Mammary epithelial cell (primary cell): ENCODE measurements at regions of chr12 and their contacts with region 1.

Region 1: DNA sequence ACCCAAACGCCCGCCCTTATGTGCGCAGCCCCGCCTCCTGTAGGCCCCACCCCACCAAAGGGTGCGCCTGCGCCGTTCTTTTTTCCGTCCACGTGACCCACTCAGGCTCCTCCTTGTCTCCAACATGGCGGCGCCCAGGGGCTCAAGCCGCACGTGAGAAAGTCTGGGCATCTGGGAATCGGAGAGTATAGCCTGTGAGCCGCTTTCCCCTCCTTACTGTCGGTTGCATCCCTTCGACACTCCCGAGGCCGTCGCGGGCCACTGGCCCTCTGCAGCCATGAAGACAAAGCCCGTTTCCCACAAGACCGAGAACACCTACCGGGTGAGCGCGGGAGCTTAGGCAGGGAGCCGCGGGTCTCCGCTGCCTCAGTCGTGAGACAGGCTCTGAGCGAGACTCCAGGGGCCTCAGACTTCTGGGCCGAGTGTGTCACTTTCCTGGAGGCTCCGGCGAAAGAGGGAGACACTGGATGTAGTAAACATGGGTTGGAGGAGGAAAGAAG is at the start of gene UTP20:
- DNase-seq: peak; percentile 84
- H3K4me3 ChIP-seq: peak within 1 kb of the TSS; percentile 82 to 100 (median 99)
- H3K27ac ChIP-seq: peak within 1 kb of the TSS; percentile 78
- H3K4me1 ChIP-seq: no peaks in the 10 kb centered on the region
- H3K27me3 ChIP-seq: no peaks in the 10 kb centered on the region
- CTCF ChIP-seq: no peak
- total RNA-seq, gene UTP20: 19.2 to 21.2 TPM

Region 2: DNA sequence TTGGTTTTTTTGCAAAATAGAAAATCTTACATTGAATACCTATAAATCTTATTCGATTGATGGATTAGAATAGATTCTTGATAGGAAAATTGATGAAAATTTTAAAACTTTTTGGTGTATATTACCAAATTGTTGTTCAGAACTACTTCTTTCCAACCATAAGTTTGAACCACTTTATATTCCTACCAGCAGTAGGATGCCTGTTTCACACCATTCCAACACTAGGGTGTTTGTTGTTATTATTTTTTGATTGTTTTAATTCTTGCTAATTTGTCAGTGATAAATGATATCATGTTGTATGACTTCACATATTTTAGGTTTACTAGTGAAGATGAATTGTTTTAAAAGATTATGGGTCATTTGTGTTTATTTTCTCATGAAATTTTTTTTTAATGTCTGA is 43.2 kb after region 1 on chr12:
- CTCF ChIA-PET with region 1: interaction called, 4 read pairs
- dilution Hi-C with region 1: no loop called
- in situ Hi-C with region 1: no loop called
- intact Hi-C with region 1: loop called (anchors 2 kb)
- DNase-seq: no peak
- H3K4me3 ChIP-seq: no peak overlapping the region
- H3K27ac ChIP-seq: no peak overlapping the region
- H3K4me1 ChIP-seq: no peaks in the 10 kb centered on the region
- H3K27me3 ChIP-seq: no peaks in the 10 kb centered on the region
- CTCF ChIP-seq: no peak